Posterior cingulate gyrus (tissue), 11 donors: ENCODE measurements at regions of chrX and their contacts with region 1.

Region 1: GRCh38 chrX:24498975-24499374 is 33.9 kb downstream of the PDK3 start:
- DNase-seq: no peak

Region 2: DNA sequence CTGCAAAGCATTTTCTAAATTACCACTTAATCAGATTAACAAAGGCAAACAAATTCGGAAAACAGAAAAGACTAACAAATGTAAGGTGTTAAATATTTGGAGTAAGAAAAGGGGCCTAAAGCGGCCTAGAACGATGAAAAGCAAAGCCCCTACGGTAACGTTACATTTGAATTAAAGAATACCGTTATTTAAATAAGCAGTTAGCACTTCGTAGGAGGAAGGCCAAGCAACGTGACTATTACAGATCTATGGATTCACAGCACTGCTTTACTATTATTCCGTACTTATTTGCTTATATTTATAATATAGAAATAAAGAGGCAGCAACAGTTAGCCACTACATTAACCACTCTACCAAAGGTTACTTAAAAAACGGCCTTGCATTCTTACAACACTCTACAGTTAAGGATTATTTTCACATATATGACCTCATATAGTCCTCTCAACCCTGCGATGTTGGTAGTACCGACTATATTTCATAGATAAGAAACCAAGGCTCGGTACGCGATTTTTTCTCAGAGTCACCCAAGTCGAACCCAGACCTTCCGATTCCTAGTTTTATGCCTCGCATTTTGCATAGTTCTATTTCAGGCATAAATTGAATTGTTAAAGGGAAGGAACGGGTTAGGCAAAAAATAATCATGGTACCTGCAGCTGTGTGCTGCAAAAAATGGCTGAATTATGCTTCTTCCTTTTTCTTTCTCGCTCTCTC is 474.9 kb before region 1 on chrX:
- intact Hi-C with region 1: no loop called
- DNase-seq: no peak

Region 3: GRCh38 chrX:24395775-24396174 is 103.2 kb before region 1 on chrX:
- intact Hi-C with region 1: loop called (anchors 1 kb)
- DNase-seq: peak in 2 of 10 donors; percentile 8 to 13